ENCODE measurements at regions of chr11 and their contacts with region 1.

Region 1: GRCh38 chr11:6531267-6531752 is 34.2 kb downstream of the DNHD1 start:
- DNase-seq: peak; percentile 75
- H3K4me3 ChIP-seq: no peak overlapping the region
- H3K27ac ChIP-seq: no peak overlapping the region
- H3K4me1 ChIP-seq: no peaks in the 10 kb centered on the region
- H3K27me3 ChIP-seq: no peaks in the 10 kb centered on the region
- CTCF ChIP-seq: peak; percentile 63 to 70
- POLR2A ChIP-seq: no peak

Region 2: GRCh38 chr11:5992604-5993251 is 538.6 kb before region 1 on chr11:
- CTCF ChIA-PET with region 1: no interaction called
- POLR2A ChIA-PET with region 1: no interaction called
- dilution Hi-C with region 1: no loop called
- intact Hi-C with region 1: no loop called
- DNase-seq: peak; percentile 38
- H3K4me3 ChIP-seq: no peak overlapping the region
- H3K27ac ChIP-seq: no peak overlapping the region
- H3K4me1 ChIP-seq: no peaks in the 10 kb centered on the region
- H3K27me3 ChIP-seq: no peaks in the 10 kb centered on the region
- CTCF ChIP-seq: peak; percentile 49 to 50
- POLR2A ChIP-seq: no peak

Region 3: GRCh38 chr11:6315811-6316425 is 215.4 kb before region 1 on chr11:
- CTCF ChIA-PET with region 1: no interaction called
- POLR2A ChIA-PET with region 1: no interaction called
- dilution Hi-C with region 1: no loop called
- intact Hi-C with region 1: no loop called
- DNase-seq: peak; percentile 51
- H3K4me3 ChIP-seq: no peak overlapping the region
- H3K27ac ChIP-seq: no peak overlapping the region
- H3K4me1 ChIP-seq: peaks cover 18% of the 10 kb centered on the region
- H3K27me3 ChIP-seq: no peaks in the 10 kb centered on the region
- CTCF ChIP-seq: peak; percentile 86 to 88
- POLR2A ChIP-seq: no peak

Region 4: DNA sequence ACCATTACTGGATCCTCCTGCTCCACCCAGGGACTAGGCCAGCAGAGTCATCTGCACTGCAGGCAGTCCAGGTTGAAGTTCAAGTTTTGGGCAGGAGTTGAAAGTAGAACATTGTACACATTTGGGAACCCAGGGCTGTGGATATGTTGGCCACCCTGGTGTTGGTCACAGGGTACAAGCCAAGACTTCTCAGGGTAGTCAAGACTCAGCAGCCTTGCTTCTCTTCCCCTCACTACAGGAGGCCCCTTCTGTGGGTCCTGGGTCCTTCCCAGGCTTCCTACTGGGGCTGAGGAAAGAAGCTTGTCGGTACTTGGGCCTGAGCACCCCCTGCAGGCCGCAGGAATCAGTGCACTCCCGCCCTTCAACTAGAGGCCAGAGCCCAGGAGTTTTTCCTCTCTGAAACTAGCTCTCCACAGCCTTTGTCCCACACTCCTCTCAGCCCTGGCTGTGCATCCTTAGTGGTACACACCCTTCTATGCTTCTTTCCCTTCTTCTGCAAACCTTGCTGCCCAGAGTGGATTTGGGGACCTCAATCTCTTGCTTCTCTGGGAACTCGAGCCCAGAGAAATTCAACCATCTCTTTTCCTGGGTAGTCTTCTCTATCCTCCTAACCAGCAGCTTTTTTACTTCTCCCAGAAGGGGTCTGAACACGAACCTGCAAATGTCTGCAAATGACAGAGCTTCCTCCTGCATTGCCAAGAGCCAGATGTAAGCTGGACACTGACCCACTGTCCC is 87.9 kb before region 1 on chr11:
- CTCF ChIA-PET with region 1: interaction called, 15 read pairs
- POLR2A ChIA-PET with region 1: no interaction called
- dilution Hi-C with region 1: no loop called
- intact Hi-C with region 1: no loop called
- DNase-seq: peak; percentile 56
- H3K4me3 ChIP-seq: no peak overlapping the region
- H3K27ac ChIP-seq: no peak overlapping the region
- H3K4me1 ChIP-seq: no peaks in the 10 kb centered on the region
- H3K27me3 ChIP-seq: no peaks in the 10 kb centered on the region
- CTCF ChIP-seq: peak; percentile 78 to 93
- POLR2A ChIP-seq: no peak

Region 5: GRCh38 chr11:6556139-6556949 is 25.0 kb after region 1 on chr11:
- CTCF ChIA-PET with region 1: interaction called, 17 read pairs
- POLR2A ChIA-PET with region 1: no interaction called
- dilution Hi-C with region 1: no loop called
- intact Hi-C with region 1: no loop called
- DNase-seq: no peak
- H3K4me3 ChIP-seq: no peak overlapping the region
- H3K27ac ChIP-seq: no peak overlapping the region
- H3K4me1 ChIP-seq: no peaks in the 10 kb centered on the region
- H3K27me3 ChIP-seq: no peaks in the 10 kb centered on the region
- CTCF ChIP-seq: no peak
- POLR2A ChIP-seq: no peak

Region 6: DNA sequence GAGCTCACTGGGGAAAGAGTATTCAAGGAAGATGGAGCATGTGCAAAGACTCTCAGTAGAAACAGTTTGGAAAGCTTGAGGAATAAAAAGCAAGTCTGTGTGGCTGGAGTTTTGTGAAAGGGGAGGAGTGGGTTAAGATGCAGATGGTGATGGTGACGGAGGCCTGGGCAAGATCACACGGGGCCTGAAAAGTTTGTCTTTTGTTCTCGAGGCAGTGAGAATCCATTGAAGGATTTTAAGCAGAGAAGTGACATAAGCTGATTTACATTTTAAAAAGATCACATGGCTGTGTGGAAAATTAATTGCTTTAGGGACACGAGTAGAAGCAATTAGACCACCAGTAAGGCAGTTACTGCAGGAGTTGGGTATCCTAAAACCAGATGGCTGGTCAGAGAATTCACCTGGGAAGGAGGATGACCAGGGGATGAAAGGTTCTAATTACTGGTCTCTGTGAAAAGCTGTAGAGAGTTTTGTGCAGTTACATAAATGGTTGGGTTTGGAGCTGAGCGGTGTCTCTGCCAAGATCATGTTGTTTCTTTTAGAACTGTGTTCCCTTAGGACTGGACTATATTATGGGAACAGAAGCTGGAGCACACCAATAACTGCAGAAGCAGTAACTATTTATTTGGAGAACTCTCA is 65.0 kb after region 1 on chr11:
- CTCF ChIA-PET with region 1: interaction called, 46 read pairs
- POLR2A ChIA-PET with region 1: no interaction called
- dilution Hi-C with region 1: no loop called
- intact Hi-C with region 1: no loop called
- DNase-seq: no peak
- H3K4me3 ChIP-seq: no peak overlapping the region
- H3K27ac ChIP-seq: no peak overlapping the region
- H3K4me1 ChIP-seq: no peaks in the 10 kb centered on the region
- H3K27me3 ChIP-seq: no peaks in the 10 kb centered on the region
- CTCF ChIP-seq: no peak
- POLR2A ChIP-seq: no peak

Region 7: GRCh38 chr11:6619004-6619745 is 87.9 kb after region 1 on chr11 and contains the start of gene TPP1:
- CTCF ChIA-PET with region 1: interaction called, 79 read pairs
- POLR2A ChIA-PET with region 1: no interaction called
- dilution Hi-C with region 1: no loop called
- intact Hi-C with region 1: loop called (anchors 1 kb)
- DNase-seq: peak; percentile 97
- H3K4me3 ChIP-seq: peak within 1 kb of the TSS; percentile 26 to 88 (median 87)
- H3K27ac ChIP-seq: peak within 1 kb of the TSS; percentile 68
- H3K4me1 ChIP-seq: peaks cover 33% of the 10 kb centered on the region
- H3K27me3 ChIP-seq: no peaks in the 10 kb centered on the region
- CTCF ChIP-seq: no peak
- POLR2A ChIP-seq: peak; percentile 92
- total RNA-seq, gene TPP1: 101 and 124 TPM in 2 replicates

Region 8: DNA sequence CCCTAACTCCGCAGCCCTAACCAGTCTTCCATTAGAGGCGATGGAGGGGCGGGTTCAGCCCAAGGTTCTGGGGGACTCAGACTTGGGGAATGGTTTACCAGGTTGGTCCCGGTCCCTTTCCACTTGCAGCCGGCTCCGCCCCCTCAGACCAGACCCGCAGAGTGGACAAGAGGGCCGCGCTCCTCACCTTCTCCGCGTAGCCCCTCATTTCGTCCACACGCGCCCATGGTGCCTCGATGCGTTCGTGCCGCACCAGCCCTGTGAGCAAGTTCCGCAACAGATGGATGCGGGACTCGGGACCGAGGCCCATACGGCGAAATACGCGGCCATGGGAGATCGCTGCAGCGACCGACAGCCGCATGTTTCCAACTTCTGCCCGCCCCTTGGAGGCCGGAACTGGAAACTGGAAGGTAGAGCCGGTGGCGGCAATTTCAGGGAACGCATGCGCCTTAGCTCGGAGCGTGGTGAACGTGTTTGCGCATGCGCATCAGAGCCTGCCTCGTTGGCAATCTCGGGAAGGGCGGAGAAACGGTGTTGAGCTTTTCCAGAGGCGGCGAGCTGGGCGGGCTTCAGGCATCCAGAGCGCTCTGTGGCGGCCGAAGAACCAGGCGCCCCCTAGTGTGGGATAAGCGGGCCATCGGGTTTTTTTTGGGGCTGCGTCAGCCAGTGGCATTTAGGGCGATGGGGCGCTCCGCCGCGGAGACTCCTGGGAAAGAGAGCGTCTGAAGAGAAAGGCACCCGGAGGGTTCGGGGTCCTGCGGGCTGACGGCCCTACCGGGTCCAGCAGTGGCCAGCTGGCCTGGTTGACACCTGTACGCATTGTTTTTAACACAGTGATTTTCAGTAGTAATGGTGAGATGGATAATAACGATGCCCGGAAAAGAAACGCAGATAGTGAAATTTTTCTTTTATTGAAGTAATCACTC is 151.9 kb after region 1 on chr11 and contains the start of gene MRPL17:
- CTCF ChIA-PET with region 1: interaction called, 48 read pairs
- POLR2A ChIA-PET with region 1: interaction called, 3 read pairs
- dilution Hi-C with region 1: no loop called
- intact Hi-C with region 1: loop called (anchors 1 kb)
- DNase-seq: peak; percentile 100
- H3K4me3 ChIP-seq: peak within 1 kb of the TSS; percentile 54 to 91 (median 61)
- H3K27ac ChIP-seq: peak within 1 kb of the TSS; percentile 82
- H3K4me1 ChIP-seq: peaks cover 22% of the 10 kb centered on the region
- H3K27me3 ChIP-seq: no peaks in the 10 kb centered on the region
- CTCF ChIP-seq: peak; percentile 94 to 95
- POLR2A ChIP-seq: peak; percentile 97
- total RNA-seq, gene MRPL17: 86.8 and 87.2 TPM in 2 replicates

Region 9: DNA sequence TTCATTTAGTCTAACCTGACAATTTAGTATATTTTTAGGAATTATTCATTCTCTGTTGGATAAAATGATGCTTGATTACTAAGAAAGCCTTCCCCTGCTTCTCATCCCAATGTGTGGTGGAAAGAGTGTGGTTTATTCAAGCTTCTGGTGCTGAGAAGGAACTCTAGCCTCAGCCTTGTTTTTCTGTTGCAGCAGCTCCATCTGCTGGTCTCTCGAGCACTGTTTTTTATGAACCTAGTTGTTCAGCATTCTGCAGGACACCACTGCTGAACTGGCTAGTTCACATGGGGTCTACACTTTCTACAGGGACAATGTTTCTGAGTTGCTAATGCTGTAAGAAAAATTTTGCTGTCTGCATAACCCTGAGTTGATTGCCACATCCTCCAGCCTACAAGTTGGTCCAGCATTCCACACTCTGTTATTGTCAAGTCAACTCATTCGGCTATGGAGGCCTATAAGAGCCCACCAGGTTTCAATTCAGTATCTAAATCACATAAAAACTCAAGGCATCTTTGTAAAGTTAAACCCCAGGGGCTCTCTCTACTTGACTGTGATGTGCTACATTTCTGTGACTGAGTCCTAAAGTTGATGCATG is 226.2 kb after region 1 on chr11:
- CTCF ChIA-PET with region 1: interaction called, 49 read pairs
- POLR2A ChIA-PET with region 1: no interaction called
- dilution Hi-C with region 1: no loop called
- intact Hi-C with region 1: loop called (anchors 1 kb)
- DNase-seq: peak; percentile 73
- H3K4me3 ChIP-seq: no peak overlapping the region
- H3K27ac ChIP-seq: no peak overlapping the region
- H3K4me1 ChIP-seq: no peaks in the 10 kb centered on the region
- H3K27me3 ChIP-seq: peaks cover 2 to 8% of the 10 kb centered on the region in 2 experiments
- CTCF ChIP-seq: peak; percentile 58 to 62
- POLR2A ChIP-seq: no peak

Measured in endothelial cell of umbilical vein (primary cell).